ENCODE measurements at regions of chr15 and their contacts with region 1.

Region 1: DNA sequence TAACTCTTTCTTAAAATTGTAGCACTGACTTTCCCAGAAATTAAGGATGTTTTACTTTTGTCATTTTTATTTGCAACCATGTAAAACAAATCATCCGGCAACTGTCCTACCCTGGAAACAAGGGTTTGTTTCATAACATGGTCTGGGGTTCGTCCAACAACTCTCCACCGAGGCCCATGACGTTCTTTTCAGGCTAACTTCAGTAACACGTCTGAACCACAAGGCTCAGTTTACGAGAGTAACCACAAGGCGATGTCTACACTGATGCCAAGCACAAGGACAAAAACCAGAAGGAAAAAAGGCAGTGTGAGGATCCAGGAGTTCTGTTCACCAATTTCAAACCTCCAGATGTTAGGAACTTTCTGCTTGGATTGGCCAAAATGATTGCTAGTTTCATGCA is 546.1 kb downstream of the NTRK3 start:
- DNase-seq: no peak

Region 2: DNA sequence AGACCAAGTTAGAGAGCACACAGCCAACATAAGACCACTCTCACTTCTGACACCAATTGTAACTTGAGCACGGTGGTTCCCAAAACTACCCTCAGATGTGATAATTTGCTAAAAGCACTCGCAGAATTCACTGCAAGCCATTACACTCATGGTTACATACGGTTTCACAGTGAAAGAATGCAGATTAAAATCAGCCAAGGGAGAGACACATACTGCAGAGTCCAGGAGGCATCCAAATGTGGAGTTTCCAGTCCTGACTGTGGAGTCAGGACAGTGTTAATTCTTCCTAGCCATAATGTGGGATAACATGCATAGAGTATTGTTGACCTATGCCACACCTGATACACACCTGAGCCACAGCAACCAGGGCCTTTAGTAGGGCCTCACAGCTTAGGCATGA is 410.3 kb before region 1 on chr15:
- intact Hi-C with region 1: no loop called
- DNase-seq: no peak

Region 3: DNA sequence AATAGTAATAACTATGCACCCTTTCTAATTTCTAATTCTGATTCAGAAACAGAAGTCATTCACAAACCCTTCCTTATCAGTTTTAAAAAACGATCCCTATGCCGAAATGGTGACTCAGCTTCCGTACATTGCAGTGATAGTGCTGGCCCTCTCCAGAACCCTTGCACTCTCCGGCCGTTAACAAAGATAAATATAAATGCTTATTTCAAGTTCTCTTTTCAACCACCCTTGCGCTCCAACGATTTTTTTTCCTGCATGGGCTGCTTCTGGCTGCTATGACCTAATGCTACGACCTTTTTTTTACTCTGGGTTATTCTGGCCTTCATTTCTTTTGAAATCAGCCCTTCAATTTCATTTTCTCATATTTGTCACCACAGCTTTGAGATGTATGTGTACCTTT is 100.0 kb before region 1 on chr15:
- intact Hi-C with region 1: loop called (anchors 5 kb)
- DNase-seq: no peak